ENCODE measurements at regions of chr4 and their contacts with region 1.

Region 1: GRCh38 chr4:123396307-123397143 is at the start of gene SPRY1:
- DNase-seq: peak; percentile 88 to 92
- H3K4me3 ChIP-seq: peak within 1 kb of the TSS; percentile 86
- H3K4me3 Mint-ChIP-seq: peak within 1 kb of the TSS; percentile 80
- H3K27ac Mint-ChIP-seq: peak within 1 kb of the TSS; percentile 67
- H3K4me1 ChIP-seq: 0 out of 2 replicates have a peak, but pooled peaks cover 6% of the 10 kb centered on the region
- H3K4me1 Mint-ChIP-seq: peaks cover 5% of the 10 kb centered on the region
- H3K27me3 ChIP-seq: no peaks in the 10 kb centered on the region
- H3K27me3 Mint-ChIP-seq: no peaks in the 10 kb centered on the region
- CTCF ChIP-seq: no peak
- total RNA-seq, gene SPRY1: 23.2 and 23.4 TPM in 2 replicates

Region 2: GRCh38 chr4:123102897-123103471 is 293.5 kb before region 1 on chr4:
- CTCF ChIA-PET with region 1: no interaction called
- POLR2A ChIA-PET with region 1: no interaction called
- intact Hi-C with region 1: loop called (anchors 5 kb)
- DNase-seq: peak in 1 of 2 experiments; percentile 34
- H3K4me3 ChIP-seq: no peak overlapping the region
- H3K4me3 Mint-ChIP-seq: no peak overlapping the region
- H3K27ac Mint-ChIP-seq: peak overlapping the region; percentile 3
- H3K4me1 ChIP-seq: peaks cover 3% of the 10 kb centered on the region; the same call in 1 of the 2 replicates
- H3K4me1 Mint-ChIP-seq: peaks cover 9% of the 10 kb centered on the region
- H3K27me3 ChIP-seq: no peaks in the 10 kb centered on the region
- H3K27me3 Mint-ChIP-seq: no peaks in the 10 kb centered on the region
- CTCF ChIP-seq: peak; percentile 46 to 57

Region 3: DNA sequence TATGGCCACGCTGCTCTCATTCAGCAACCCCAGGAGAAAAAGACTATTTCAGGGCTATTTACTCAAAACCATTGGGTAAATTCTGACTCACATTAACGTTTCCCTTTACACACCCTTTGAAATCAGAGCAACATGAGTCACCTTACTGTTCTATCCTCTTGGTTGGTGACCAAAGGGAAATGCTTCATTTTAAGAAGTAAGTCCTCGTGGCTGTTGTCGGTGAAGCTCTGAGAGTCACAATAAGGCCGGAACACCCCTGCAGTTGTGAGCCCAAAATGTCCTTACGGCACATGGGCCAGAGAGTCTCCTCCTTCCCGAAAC is 56.2 kb before region 1 on chr4:
- CTCF ChIA-PET with region 1: no interaction called
- POLR2A ChIA-PET with region 1: no interaction called
- intact Hi-C with region 1: no loop called
- DNase-seq: no peak
- H3K4me3 ChIP-seq: no peak overlapping the region
- H3K4me3 Mint-ChIP-seq: no peak overlapping the region
- H3K27ac Mint-ChIP-seq: peak overlapping the region; percentile 50
- H3K4me1 ChIP-seq: peaks cover 15% of the 10 kb centered on the region
- H3K4me1 Mint-ChIP-seq: peaks cover 28% of the 10 kb centered on the region
- H3K27me3 ChIP-seq: no peaks in the 10 kb centered on the region
- H3K27me3 Mint-ChIP-seq: no peaks in the 10 kb centered on the region
- CTCF ChIP-seq: no peak

Region 4: DNA sequence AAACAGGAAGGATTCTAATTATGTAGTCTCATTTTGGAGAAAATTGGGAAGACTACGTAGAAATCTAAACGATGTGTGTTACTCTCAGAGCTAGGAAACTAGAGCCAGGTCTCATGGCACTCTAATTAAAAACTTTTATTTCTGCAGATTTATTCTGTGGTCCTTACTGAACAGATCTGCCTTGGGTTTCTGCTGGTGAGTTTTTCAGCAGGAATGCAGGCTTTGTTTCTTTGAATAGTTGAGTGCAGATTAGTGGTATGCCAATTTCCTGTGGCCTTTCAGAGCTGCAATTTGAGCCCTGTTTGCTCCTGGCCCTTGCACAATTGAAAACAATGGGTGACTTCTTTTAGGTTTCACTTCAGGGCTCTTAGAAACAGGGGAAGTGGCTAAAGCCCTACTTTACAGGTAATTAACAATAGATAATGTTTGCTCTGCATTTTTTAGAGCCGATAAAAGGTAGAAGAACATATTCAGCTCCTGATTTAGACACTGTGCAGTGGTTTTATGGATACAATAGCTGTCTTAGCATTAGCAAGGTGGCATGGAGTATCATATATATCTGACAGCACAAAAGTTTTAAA is 21.9 kb after region 1 on chr4:
- CTCF ChIA-PET with region 1: no interaction called
- POLR2A ChIA-PET with region 1: no interaction called
- intact Hi-C with region 1: loop called (anchors 1 kb)
- DNase-seq: peak; percentile 51 to 59
- H3K4me3 ChIP-seq: no peak overlapping the region
- H3K4me3 Mint-ChIP-seq: no peak overlapping the region
- H3K27ac Mint-ChIP-seq: peak overlapping the region; percentile 73
- H3K4me1 ChIP-seq: peaks cover 36% of the 10 kb centered on the region
- H3K4me1 Mint-ChIP-seq: peaks cover 25% of the 10 kb centered on the region
- H3K27me3 ChIP-seq: no peaks in the 10 kb centered on the region
- H3K27me3 Mint-ChIP-seq: no peaks in the 10 kb centered on the region
- CTCF ChIP-seq: no peak

Region 5: GRCh38 chr4:123477711-123478209 is 81.2 kb after region 1 on chr4:
- CTCF ChIA-PET with region 1: no interaction called
- POLR2A ChIA-PET with region 1: interaction called, 8 read pairs
- intact Hi-C with region 1: loop called (anchors 1 kb)
- DNase-seq: no peak
- H3K4me3 ChIP-seq: no peak overlapping the region
- H3K4me3 Mint-ChIP-seq: peak overlapping the region; percentile 70
- H3K27ac Mint-ChIP-seq: peak overlapping the region; percentile 97
- H3K4me1 ChIP-seq: peaks cover 48% of the 10 kb centered on the region
- H3K4me1 Mint-ChIP-seq: peaks cover 50% of the 10 kb centered on the region
- H3K27me3 ChIP-seq: no peaks in the 10 kb centered on the region
- H3K27me3 Mint-ChIP-seq: no peaks in the 10 kb centered on the region
- CTCF ChIP-seq: no peak

Region 6: DNA sequence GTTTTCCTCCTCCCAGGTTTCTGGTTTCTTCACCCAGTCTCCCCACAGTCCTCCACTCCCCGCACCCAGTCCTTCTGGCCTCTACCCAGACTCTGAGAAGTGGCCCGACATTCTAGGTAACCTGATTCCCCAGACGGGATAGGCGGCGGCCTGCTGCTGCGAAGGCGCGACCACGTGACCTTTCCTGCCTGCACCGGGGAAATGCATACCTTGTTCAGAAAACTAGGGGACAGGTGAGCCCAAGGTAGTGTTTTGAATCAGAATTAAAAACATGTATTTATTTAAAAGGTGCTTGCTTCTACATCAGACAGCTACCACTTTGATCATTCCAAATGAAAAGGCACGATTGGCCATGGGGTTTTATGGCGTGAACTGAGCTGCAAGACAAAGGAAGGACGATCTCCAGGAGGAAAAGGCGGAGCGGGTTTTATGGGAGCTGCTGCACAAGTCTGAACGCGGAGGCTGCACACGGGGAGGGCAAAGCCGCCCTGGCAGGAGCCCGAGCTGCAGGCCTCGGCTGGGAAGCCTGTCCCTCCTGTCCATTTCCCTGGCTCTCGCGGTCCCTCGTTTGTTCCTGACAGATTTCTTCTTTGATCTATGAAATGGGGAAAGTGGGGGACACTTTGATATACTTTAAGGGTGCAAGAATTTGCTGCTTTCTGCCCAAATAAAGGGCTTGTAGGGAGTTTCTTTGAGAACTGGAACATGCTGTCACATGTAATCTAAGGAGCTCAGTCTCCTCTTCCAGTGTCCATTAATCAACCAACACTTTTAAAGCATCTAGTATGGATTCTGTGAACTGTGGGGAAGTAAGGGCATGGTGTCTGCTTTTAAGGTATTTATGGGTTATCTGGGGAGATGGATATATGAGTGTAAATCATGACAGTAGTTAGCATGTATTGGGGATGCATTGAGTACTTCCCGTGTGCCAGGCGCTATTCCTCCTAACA is 151.0 kb after region 1 on chr4:
- CTCF ChIA-PET with region 1: no interaction called
- POLR2A ChIA-PET with region 1: interaction called, 4 read pairs
- intact Hi-C with region 1: loop called (anchors 1 kb)
- DNase-seq: peak; percentile 85 to 90
- H3K4me3 ChIP-seq: peak overlapping the region; percentile 31
- H3K4me3 Mint-ChIP-seq: peak overlapping the region; percentile 85
- H3K27ac Mint-ChIP-seq: peak overlapping the region; percentile 94
- H3K4me1 ChIP-seq: peaks cover 33% of the 10 kb centered on the region
- H3K4me1 Mint-ChIP-seq: peaks cover 23% of the 10 kb centered on the region
- H3K27me3 ChIP-seq: no peaks in the 10 kb centered on the region
- H3K27me3 Mint-ChIP-seq: no peaks in the 10 kb centered on the region
- CTCF ChIP-seq: no peak

Region 7: GRCh38 chr4:123564758-123565346 is 168.3 kb after region 1 on chr4:
- CTCF ChIA-PET with region 1: interaction called, 8 read pairs
- POLR2A ChIA-PET with region 1: no interaction called
- intact Hi-C with region 1: loop called (anchors 1 kb)
- DNase-seq: peak; percentile 80 to 81
- H3K4me3 ChIP-seq: no peak overlapping the region
- H3K4me3 Mint-ChIP-seq: no peak overlapping the region
- H3K27ac Mint-ChIP-seq: no peak overlapping the region
- H3K4me1 ChIP-seq: peaks cover 20% of the 10 kb centered on the region
- H3K4me1 Mint-ChIP-seq: peaks cover 22% of the 10 kb centered on the region
- H3K27me3 ChIP-seq: no peaks in the 10 kb centered on the region
- H3K27me3 Mint-ChIP-seq: no peaks in the 10 kb centered on the region
- CTCF ChIP-seq: peak; percentile 88 to 99

Region 8: DNA sequence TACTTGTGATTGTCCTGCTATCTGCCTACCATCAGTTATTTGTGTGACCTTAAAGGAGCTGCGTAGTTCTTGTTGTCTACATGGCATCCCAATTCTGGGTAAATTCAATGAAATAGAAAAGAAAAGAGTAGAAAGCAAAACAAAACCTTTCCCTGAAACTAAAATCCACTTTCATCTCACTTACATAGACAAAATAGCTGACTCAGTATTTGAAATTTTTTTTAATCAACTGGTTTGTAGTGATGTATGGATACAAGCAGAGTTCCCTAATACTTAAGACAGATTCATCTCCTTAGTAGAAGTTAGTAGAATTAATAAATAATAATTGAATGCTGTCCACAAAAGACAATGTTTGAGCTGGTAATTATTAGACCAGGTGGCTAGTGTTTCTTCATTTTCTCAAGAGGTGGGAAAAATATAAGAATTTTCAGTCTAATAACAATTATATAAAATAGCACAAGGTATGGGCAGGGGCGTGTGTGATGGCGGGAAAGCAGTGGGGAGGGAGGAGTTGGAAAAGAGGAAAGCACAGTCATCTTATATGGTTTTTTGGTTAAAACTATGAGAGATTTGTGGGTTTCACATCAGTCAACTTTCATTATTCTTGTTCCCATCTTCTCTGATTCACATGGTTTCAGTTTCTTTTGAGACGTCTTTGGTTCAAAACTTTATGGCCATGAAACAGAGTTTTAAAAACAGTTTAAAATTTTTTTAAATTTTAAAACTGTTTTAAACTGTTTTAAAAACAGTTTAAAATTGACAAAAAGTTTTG is 275.3 kb after region 1 on chr4:
- CTCF ChIA-PET with region 1: no interaction called
- POLR2A ChIA-PET with region 1: no interaction called
- intact Hi-C with region 1: no loop called
- DNase-seq: no peak
- H3K4me3 ChIP-seq: no peak overlapping the region
- H3K4me3 Mint-ChIP-seq: no peak overlapping the region
- H3K27ac Mint-ChIP-seq: no peak overlapping the region
- H3K4me1 ChIP-seq: no peaks in the 10 kb centered on the region; the same call in 1 of the 2 replicates
- H3K4me1 Mint-ChIP-seq: peaks cover 6% of the 10 kb centered on the region
- H3K27me3 ChIP-seq: no peaks in the 10 kb centered on the region
- H3K27me3 Mint-ChIP-seq: no peaks in the 10 kb centered on the region
- CTCF ChIP-seq: no peak

Region 9: GRCh38 chr4:123750044-123750443 is 353.5 kb after region 1 on chr4:
- CTCF ChIA-PET with region 1: no interaction called
- POLR2A ChIA-PET with region 1: no interaction called
- intact Hi-C with region 1: loop called (anchors 10 kb)
- DNase-seq: peak; percentile 62 to 79
- H3K4me3 ChIP-seq: no peak overlapping the region
- H3K4me3 Mint-ChIP-seq: no peak overlapping the region
- H3K27ac Mint-ChIP-seq: peak overlapping the region; percentile 74
- H3K4me1 ChIP-seq: peaks cover 15% of the 10 kb centered on the region
- H3K4me1 Mint-ChIP-seq: peaks cover 13% of the 10 kb centered on the region
- H3K27me3 ChIP-seq: no peaks in the 10 kb centered on the region
- H3K27me3 Mint-ChIP-seq: no peaks in the 10 kb centered on the region
- CTCF ChIP-seq: no peak